Activated CD4-positive, alpha-beta memory T cell treated with anti-CD3 and anti-CD28 coated beads, Interleukin-2, amount 10 ng/mL, durations not matched to agents 7 days and 5 days (primary cell): ENCODE measurements at regions of chrX and their contacts with region 1.

Region 1: GRCh38 chrX:10189317-10190268 is 32.8 kb downstream of the CLCN4 start:
- DNase-seq: peak; percentile 66
- H3K4me3 Mint-ChIP-seq: no peak overlapping the region
- H3K27ac Mint-ChIP-seq: no peak overlapping the region
- H3K4me1 Mint-ChIP-seq: no peaks in the 10 kb centered on the region
- H3K27me3 Mint-ChIP-seq: peaks cover 2% of the 10 kb centered on the region

Region 2: GRCh38 chrX:10722851-10723250 is 533.3 kb after region 1 on chrX:
- CTCF ChIA-PET with region 1: interaction called, 36 read pairs
- POLR2A ChIA-PET with region 1: no interaction called
- DNase-seq: peak; percentile 21
- H3K4me3 Mint-ChIP-seq: no peak overlapping the region
- H3K27ac Mint-ChIP-seq: no peak overlapping the region
- H3K4me1 Mint-ChIP-seq: no peaks in the 10 kb centered on the region
- H3K27me3 Mint-ChIP-seq: no peaks in the 10 kb centered on the region